Activated naive CD4-positive, alpha-beta T cell treated with anti-CD3 and anti-CD28 coated beads for 36 hours (primary cell): ENCODE measurements at regions of chr12 and their contacts with region 1.

Region 1: DNA sequence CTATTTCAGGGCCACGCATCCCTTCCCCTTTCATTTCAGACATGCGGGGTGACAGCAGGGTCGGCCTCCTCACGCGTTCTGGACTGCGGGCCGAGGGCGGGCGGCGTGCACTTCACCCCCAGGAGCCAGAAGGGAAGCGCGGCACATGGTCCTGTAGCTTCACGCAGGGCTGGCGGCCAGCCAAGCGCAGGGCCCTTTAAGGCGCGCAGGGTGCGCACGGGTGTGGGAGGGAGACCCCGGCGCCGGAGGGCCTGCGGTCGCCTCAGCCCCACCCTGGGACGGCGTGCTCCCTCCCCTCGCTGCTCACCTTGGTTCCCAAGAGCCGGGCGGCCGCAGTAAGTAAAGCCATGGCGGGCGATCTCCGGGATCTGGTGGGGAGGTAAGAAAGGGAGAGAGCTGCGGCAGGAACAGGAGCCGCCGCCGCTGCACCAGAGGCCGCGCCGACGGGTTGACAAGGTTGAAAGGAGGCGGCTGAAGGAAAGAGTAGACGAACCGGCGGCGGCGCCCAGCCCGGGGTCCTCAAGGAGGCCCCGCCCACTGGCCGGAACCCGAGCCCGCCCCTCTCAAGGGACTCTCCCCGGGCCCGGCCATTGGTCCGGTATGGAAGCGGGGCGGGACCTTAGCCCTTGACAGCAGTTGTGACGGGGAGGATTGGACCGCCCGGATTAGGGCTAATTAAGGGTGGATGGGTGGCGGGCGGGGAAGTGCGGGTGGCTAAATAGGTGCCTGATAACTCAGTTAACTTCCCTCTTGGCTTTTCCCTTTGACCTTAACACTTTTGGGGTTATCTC is at the start of gene CS:
- DNase-seq: peak; percentile 99
- H3K4me3 Mint-ChIP-seq: peak within 1 kb of the TSS; percentile 91
- H3K27ac Mint-ChIP-seq: peak within 1 kb of the TSS; percentile 92
- H3K4me1 Mint-ChIP-seq: peaks cover 42% of the 10 kb centered on the region
- H3K27me3 Mint-ChIP-seq: no peaks in the 10 kb centered on the region
- total RNA-seq, gene CS: 330 to 336 TPM

Region 2: GRCh38 chr12:56127888-56128669 is 172.0 kb before region 1 on chr12 and contains the start of gene ESYT1:
- CTCF ChIA-PET with region 1: interaction called, 3 read pairs
- intact Hi-C with region 1: loop called (anchors 1 kb)
- DNase-seq: peak; percentile 99
- H3K4me3 Mint-ChIP-seq: peak within 1 kb of the TSS; percentile 91
- H3K27ac Mint-ChIP-seq: peak within 1 kb of the TSS; percentile 86
- H3K4me1 Mint-ChIP-seq: peaks cover 55% of the 10 kb centered on the region
- H3K27me3 Mint-ChIP-seq: no peaks in the 10 kb centered on the region
- total RNA-seq, gene ESYT1: 87.4 to 88.9 TPM

Region 3: DNA sequence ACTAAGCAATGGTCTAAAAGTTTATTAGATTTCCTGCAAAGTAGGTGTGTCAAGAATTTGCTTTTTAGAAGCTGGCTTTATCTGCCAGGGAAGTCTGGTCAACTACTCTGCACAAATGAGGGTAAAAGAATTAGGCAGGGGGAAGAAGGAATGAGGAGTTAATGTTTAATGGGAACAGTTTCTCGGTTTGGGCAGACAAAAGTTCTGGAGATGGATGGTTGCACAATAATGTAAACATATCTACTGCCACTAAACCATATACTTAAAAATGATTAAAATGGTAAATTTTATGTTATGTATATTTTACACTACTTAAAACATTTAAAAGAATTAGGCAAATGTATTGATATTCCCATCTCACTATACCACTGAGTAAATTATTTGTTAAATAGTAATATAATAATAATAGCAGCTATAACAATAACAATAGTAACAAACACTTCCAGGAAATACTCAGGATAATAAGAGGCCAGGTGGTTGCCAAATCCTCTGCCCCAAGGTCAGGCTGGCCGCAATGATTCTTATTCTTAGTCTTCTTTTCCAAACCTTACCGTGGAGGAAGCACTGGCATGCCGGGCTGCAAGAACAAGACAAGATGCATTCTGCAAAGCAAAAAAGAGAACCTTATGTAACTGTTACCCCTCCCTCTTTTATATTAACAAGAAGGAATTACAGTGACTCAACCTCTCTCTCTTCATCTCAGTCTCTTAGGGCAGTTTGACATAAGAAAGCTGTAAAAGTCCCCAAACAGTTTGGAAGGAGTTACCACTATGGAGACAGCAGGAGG is 13.8 kb before region 1 on chr12:
- CTCF ChIA-PET with region 1: interaction called, 3 read pairs
- intact Hi-C with region 1: loop called (anchors 1 kb)
- DNase-seq: no peak
- H3K4me3 Mint-ChIP-seq: no peak overlapping the region
- H3K27ac Mint-ChIP-seq: peak overlapping the region; percentile 44
- H3K4me1 Mint-ChIP-seq: peaks cover 14% of the 10 kb centered on the region
- H3K27me3 Mint-ChIP-seq: no peaks in the 10 kb centered on the region

Region 4: DNA sequence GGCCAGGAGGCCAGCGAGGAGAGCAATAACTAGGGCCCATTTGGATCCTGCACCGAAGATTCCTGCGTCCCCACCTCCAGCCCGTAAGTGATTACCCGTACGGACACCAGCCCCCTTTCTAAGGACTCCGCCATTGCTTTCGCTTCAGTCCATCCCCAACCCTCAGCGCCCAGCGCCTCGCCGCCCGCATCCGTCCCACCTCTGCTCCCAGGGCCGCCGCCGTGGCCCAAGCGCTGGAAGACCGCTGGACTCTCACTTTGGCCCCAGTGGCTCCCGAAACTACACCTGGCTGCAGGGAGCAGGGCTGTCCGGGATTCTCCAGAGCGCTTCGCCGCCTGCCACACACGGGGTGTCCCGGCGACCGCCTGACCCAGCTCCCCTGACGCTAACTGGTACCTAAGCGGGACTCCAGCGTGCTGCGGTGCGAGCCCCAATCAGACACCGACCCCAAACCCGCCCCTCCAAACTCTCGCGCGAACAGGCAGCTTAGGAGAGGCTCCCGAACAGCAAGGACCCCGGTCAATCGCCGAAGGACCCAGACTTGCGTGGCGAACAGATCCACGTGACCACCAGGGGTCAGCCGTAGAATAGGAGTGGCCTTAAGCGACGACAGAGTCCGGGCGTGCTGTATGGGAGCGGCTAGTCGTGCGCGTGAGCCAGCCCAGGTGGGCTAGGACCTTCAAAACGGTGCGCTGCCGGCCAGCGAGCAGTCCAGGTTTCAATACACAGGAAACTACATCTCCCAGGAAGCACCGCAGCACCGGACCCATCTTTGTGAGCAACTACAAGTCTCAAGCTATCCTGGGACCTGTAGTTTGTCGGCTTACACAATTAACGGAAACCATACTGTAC is 15.8 kb after region 1 on chr12 and contains the start of gene CNPY2:
- CTCF ChIA-PET with region 1: interaction called, 5 read pairs
- intact Hi-C with region 1: loop called (anchors 1 kb)
- DNase-seq: peak; percentile 92
- H3K4me3 Mint-ChIP-seq: peak within 1 kb of the TSS; percentile 97
- H3K27ac Mint-ChIP-seq: peak within 1 kb of the TSS; percentile 97
- H3K4me1 Mint-ChIP-seq: peaks cover 16% of the 10 kb centered on the region
- H3K27me3 Mint-ChIP-seq: no peaks in the 10 kb centered on the region
- total RNA-seq, gene CNPY2: 47.5 to 57.3 TPM

Region 5: GRCh38 chr12:56359851-56360767 is 60.1 kb after region 1 on chr12 and contains the start of gene STAT2:
- CTCF ChIA-PET with region 1: interaction called, 3 read pairs
- intact Hi-C with region 1: loop called (anchors 1 kb)
- DNase-seq: peak; percentile 99
- H3K4me3 Mint-ChIP-seq: peak within 1 kb of the TSS; percentile 93
- H3K27ac Mint-ChIP-seq: peak within 1 kb of the TSS; percentile 93
- H3K4me1 Mint-ChIP-seq: peaks cover 20% of the 10 kb centered on the region
- H3K27me3 Mint-ChIP-seq: no peaks in the 10 kb centered on the region
- total RNA-seq, gene STAT2: 109 to 119 TPM

Region 6: DNA sequence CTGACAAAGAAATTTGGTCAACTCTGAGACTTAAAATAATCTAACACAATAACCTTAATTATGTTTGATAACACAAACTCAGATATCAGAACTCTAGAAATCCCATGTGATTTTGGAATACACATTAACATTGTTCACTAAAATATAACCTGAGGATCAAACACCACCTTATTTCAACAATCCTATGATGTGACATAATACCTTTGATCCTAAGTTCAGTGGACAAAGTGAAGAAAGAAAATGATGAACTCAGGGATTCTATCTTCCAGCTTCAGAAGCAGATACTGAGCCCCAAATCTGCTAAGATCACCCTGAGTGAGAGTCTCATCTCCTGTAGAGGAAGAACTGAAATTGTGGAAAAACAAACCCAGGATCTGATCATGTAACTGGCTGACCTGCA is 98.3 kb after region 1 on chr12:
- CTCF ChIA-PET with region 1: no interaction called
- intact Hi-C with region 1: no loop called
- DNase-seq: no peak
- H3K4me3 Mint-ChIP-seq: no peak overlapping the region
- H3K27ac Mint-ChIP-seq: no peak overlapping the region
- H3K4me1 Mint-ChIP-seq: no peaks in the 10 kb centered on the region
- H3K27me3 Mint-ChIP-seq: no peaks in the 10 kb centered on the region

Region 7: DNA sequence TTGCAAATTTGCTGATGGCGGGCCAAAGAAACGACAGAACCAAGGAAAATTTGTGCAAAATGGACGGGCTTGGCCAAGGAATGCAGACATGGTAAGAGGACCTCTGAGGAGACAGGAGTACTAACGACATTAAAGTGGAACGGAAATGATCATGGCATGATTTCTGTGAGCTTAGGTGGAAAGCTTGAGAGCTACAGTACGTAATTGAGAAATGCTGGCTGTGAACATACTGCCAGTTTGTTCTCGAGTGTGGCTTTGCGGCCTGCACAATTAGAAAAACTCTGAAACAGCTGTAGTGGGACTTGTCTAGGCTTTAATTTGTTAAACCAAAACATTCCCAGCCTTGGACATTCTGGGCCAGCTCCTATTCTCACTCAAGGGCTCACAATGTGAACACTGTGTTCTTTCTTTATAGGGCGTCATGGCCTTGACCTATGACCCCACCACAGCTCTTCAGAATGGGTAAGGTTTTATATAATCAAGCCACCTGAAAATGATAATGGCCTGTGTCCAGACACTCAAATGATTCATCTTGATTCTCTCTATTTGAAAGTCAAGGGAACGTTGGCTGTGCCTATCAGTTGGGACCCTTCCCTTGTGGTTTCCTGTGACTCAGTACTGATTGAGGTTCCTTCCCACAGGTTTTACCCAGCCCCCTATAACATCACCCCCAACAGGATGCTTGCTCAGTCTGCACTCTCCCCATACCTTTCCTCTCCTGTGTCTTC is 281.5 kb after region 1 on chr12:
- CTCF ChIA-PET with region 1: no interaction called
- intact Hi-C with region 1: no loop called
- DNase-seq: peak; percentile 33
- H3K4me3 Mint-ChIP-seq: no peak overlapping the region
- H3K27ac Mint-ChIP-seq: no peak overlapping the region
- H3K4me1 Mint-ChIP-seq: peaks cover 19% of the 10 kb centered on the region
- H3K27me3 Mint-ChIP-seq: no peaks in the 10 kb centered on the region